ENCODE measurements at regions of chr10 and their contacts with region 1.

Region 1: GRCh38 chr10:132637477-132638129 is 100.0 kb downstream of the INPP5A start:
- DNase-seq: no peak
- H3K4me3 ChIP-seq: no peak overlapping the region
- H3K27ac ChIP-seq: peak overlapping the region in 2 of 4 donors; percentile 22
- H3K4me1 ChIP-seq: peaks cover 10 to 56% (median 24%) of the 10 kb centered on the region in 3 donors
- H3K27me3 ChIP-seq: no peaks in the 10 kb centered on the region
- CTCF ChIP-seq: peak; percentile 54 to 79 (median 70)
- POLR2A ChIP-seq: no peak

Region 2: DNA sequence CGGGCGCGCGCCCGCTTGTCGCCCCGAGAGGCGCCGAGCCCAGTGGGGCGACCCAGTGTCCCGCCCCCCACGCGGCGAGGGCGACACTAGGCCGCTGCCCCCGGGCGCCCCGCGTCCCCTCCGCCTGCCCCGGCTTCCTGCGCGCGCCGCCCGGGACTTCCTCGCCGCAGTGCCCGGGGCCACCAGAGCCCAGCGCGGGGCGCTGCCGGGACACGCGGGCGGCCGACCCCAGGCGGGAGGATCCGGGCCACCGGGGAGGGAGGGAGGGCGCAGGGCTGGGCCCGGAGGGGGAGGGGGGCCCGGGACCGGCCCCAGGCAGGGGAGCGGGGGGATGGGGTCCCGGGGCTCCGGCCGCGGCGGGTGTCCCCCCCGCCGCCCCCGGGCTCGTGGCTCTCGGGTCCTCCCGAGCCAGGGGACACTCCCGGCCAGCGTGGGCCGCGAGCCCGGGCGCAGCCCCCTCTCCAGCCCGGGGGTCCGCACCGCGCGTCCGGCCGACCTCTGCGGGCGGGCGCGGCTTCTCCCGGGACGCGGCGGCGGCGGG is 241.0 kb before region 1 on chr10:
- intact Hi-C with region 1: loop called (anchors 10 kb)
- DNase-seq: no peak
- H3K4me3 ChIP-seq: peak overlapping the region; percentile 68 to 87 (median 71)
- H3K27ac ChIP-seq: peak overlapping the region; percentile 82 to 98 (median 97)
- H3K4me1 ChIP-seq: peaks cover 38 to 57% (median 51%) of the 10 kb centered on the region in 3 donors
- H3K27me3 ChIP-seq: no peaks in the 10 kb centered on the region
- CTCF ChIP-seq: peak in 5 of 6 experiments; percentile 18 to 57 (median 47)
- POLR2A ChIP-seq: no peak

Region 3: DNA sequence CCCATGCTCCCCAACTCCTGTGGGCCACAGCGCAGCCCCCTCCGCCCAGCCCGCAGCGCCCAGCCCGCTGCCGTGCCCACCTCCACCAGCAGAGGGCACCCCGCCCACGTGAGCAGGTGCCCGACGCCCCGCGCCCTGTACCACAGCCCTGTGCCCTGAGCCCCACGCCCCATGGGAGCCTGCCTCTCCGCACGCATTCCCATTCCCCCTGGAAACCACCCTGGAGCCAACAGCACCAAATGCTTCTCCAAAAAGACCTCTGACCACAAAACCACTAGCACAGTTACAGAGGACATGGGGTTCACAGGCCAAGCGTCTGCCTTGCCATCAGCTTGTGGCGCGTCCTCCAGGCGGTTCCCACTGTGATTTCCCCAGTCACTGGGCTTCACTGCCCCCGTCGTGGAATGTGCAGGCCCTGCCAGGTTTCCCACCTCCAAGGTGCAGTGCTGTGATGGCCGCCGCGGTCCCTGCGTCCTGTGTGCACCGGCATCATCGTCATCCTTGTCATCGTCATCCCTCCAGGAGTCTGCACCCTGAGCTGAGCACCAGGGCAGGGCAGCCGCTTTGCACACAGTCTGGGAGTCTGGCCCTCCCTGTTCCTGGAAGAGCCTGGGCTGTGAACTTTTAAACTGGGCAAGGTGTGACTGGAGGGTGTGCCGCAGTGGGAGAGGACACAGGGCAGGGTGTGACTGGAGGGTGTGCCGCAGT is 178.9 kb before region 1 on chr10:
- intact Hi-C with region 1: loop called (anchors 2 kb)
- DNase-seq: no peak
- H3K4me3 ChIP-seq: peak overlapping the region in 1 of 4 donors; percentile 3
- H3K27ac ChIP-seq: peak overlapping the region in 3 of 4 donors; percentile 10 to 63 (median 53)
- H3K4me1 ChIP-seq: peaks cover 15 to 54% (median 24%) of the 10 kb centered on the region in 3 donors
- H3K27me3 ChIP-seq: peaks cover 0 to 29% (median 0%) of the 10 kb centered on the region in 4 donors
- CTCF ChIP-seq: peak; percentile 93 to 99 (median 95)
- POLR2A ChIP-seq: no peak

Region 4: DNA sequence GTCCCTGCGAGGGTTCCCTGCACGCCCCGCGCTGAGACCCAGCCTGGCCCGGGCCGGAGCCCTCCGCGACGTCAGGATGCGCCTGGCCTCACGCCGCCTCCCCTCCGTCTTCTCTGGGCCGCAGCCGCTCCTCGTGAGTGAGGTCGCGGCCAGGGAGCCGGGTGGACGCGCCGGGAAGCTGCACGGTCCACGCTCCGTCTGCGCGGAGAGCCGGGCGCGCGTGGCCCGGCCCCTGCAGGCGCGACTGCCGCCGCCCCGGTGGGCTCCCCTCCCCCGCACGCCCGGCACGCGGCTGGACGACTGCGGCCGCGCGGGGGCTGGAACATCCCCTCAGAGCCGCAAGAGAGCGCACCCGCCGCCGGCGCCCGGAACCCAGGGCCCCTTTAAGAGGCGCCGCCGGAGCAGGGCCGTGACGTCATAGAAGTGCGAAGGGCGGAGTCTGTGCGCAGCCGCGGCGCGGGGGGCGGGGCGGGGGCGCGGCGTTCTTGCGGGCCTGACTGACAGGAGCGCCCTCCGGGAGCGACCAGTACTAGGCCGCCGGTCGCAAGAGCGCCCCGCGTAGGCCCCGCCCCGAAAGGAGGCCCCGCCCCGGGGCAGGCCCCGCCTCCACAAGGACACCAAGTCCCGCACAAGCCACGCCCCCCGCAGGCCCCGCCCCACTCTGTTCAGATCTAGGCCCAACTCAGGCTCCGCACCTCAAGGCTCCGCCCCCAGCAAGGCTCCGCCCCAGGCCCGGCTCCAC is 100.5 kb before region 1 on chr10:
- intact Hi-C with region 1: loop called (anchors 10 kb)
- DNase-seq: peak; percentile 99
- H3K4me3 ChIP-seq: peak overlapping the region; percentile 56 to 88 (median 68)
- H3K27ac ChIP-seq: peak overlapping the region; percentile 81 to 95 (median 86)
- H3K4me1 ChIP-seq: peaks cover 37 to 60% (median 43%) of the 10 kb centered on the region in 3 donors
- H3K27me3 ChIP-seq: no peaks in the 10 kb centered on the region
- CTCF ChIP-seq: peak in 4 of 6 experiments; percentile 27 to 57 (median 42)
- POLR2A ChIP-seq: peak in 3 of 4 donors; percentile 51 to 78 (median 58)

Region 5: GRCh38 chr10:132774902-132775747 is 137.5 kb after region 1 on chr10:
- intact Hi-C with region 1: no loop called
- DNase-seq: no peak
- H3K4me3 ChIP-seq: no peak overlapping the region
- H3K27ac ChIP-seq: no peak overlapping the region
- H3K4me1 ChIP-seq: peaks cover 0 to 4% (median 0%) of the 10 kb centered on the region in 3 donors
- H3K27me3 ChIP-seq: no peaks in the 10 kb centered on the region
- CTCF ChIP-seq: no peak
- POLR2A ChIP-seq: no peak

Measured in esophagus squamous epithelium (tissue), 5 donors.